A673 (cell line): ENCODE measurements at regions of chr10 and their contacts with region 1.

Region 1: DNA sequence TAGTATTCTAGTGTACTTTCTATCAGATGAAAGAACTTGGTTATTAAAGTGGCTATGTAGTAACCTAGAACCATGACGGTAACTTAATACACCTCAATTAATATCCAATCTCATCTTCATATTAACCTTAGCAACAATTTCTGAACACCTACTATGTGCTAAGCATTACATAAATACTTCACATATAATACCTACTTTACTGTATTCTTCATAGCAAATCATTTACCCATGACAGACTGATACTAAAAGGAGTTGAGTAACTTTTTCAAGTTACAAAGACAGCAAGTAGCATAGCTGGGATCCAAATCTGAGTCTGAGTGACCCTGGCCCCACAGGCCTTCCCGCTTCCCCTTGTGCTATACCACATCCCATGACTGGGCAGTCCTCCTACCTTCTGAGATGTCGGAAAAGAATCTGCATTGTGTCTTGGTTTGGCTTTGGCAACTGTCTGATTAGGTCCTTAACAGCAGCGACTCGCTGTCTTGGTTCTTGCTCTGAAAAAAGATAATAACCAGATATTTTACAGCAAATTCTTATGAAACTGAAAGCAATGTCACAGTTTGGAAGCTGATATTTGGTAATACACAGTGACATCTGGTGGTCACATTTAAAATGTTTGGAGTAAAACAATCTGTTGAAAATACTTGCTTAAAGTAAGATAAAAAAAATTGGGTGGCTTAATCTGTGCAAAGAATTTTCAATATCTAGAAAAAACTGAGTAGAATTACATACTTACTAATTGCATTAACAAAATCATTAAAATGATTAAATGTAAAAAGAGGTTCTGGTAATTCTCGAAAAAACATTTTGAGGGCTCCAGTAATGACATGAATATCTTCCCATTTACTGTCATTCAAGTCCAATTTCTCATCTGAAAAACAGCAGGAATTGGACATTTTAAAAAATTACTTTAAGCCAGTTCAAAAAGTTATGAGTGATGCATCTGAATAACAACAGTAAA is 120.1 kb downstream of the ARHGAP12 start:
- DNase-seq: peak; percentile 60
- H3K4me3 ChIP-seq: no peak overlapping the region
- H3K27ac ChIP-seq: peak overlapping the region; percentile 43
- H3K4me1 ChIP-seq: no peaks in the 10 kb centered on the region
- H3K27me3 ChIP-seq: no peaks in the 10 kb centered on the region
- CTCF ChIP-seq: peak; percentile 67

Region 2: DNA sequence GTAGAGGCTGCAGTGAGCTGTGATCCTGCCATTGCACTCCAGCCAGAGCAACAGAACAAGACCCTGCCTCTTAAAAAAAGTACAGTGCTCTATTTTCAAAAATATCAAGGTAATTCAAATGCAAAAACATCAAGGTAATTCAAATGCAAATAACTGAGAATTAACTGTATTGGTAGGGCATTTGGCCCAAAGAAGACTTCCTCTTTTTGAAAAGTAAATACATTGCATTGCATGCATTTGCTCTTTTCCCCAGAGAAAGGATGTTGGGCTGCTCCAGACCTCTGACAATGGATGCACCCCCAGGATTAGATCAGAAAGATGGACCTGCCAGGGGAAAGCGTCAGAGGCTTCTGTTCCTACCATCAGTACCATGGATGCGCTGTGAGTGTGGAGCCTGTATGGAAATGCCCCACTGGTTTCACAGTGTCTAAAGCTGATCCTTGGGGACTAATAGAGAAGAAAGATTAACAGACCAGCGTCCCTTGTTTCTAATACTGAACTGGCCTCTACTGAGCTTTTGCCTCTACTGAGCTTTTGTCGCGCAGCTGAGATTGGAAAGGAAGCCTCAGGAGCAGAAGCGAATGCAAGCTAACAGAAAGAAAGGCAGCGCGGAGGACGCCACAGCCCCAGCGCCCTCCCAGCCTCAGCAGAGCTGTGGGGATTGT is 1085.5 kb before region 1 on chr10:
- CTCF ChIA-PET with region 1: interaction called, 3 read pairs
- POLR2A ChIA-PET with region 1: no interaction called
- intact Hi-C with region 1: loop called (anchors 10 kb)
- DNase-seq: no peak
- H3K4me3 ChIP-seq: no peak overlapping the region
- H3K27ac ChIP-seq: no peak overlapping the region
- H3K4me1 ChIP-seq: no peaks in the 10 kb centered on the region
- H3K27me3 ChIP-seq: no peaks in the 10 kb centered on the region
- CTCF ChIP-seq: no peak

Region 3: GRCh38 chr10:30751678-30752331 is 1056.7 kb before region 1 on chr10:
- CTCF ChIA-PET with region 1: interaction called, 11 read pairs
- POLR2A ChIA-PET with region 1: no interaction called
- intact Hi-C with region 1: loop called (anchors 5 kb)
- DNase-seq: peak; percentile 80
- H3K4me3 ChIP-seq: no peak overlapping the region
- H3K27ac ChIP-seq: no peak overlapping the region
- H3K4me1 ChIP-seq: no peaks in the 10 kb centered on the region
- H3K27me3 ChIP-seq: no peaks in the 10 kb centered on the region
- CTCF ChIP-seq: peak; percentile 97

Region 4: DNA sequence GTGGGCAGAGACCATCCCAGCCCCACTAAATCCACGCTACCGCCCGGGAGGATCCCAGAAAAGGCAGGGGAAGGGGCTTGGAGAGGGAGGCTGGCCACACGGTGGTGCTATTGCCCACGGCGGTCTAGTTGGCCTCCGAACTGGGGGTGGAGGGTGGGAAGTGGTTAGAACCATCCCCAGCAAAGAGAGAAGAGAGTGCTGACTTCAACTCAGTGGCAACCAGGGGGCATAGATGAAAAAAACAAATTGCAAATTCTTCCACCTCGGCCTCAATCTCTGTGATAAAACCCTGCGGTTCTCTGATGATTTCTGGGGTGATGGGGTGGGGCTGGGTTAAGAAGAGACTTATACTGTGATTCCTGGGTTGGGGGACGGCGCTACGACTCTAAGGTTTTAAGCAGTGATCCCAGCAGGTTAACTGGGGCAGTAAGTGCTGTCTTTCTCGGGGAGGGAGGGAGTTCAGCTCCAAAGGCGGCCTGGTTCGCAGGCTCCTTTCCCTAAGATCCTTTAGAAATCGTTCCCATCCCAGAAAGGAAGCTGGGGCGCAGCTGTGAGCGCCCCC is 1024.5 kb before region 1 on chr10:
- CTCF ChIA-PET with region 1: interaction called, 4 read pairs
- POLR2A ChIA-PET with region 1: no interaction called
- intact Hi-C with region 1: loop called (anchors 5 kb)
- DNase-seq: peak; percentile 88
- H3K4me3 ChIP-seq: peak overlapping the region; percentile 56
- H3K27ac ChIP-seq: no peak overlapping the region
- H3K4me1 ChIP-seq: no peaks in the 10 kb centered on the region
- H3K27me3 ChIP-seq: no peaks in the 10 kb centered on the region
- CTCF ChIP-seq: peak; percentile 94

Region 5: GRCh38 chr10:31318854-31319601 is 489.5 kb before region 1 on chr10 and contains the start of gene ZEB1:
- CTCF ChIA-PET with region 1: no interaction called
- POLR2A ChIA-PET with region 1: no interaction called
- intact Hi-C with region 1: loop called (anchors 10 kb)
- DNase-seq: peak; percentile 86
- H3K4me3 ChIP-seq: peak within 1 kb of the TSS; percentile 68
- H3K27ac ChIP-seq: peak within 1 kb of the TSS; percentile 21
- H3K4me1 ChIP-seq: peaks cover 15% of the 10 kb centered on the region
- H3K27me3 ChIP-seq: peaks cover 43% of the 10 kb centered on the region
- CTCF ChIP-seq: 0 out of 2 replicates have a peak, but pooled peaks have one; percentile 22
- total RNA-seq, gene ZEB1: 8.3 and 10.3 TPM in 2 replicates

Region 6: DNA sequence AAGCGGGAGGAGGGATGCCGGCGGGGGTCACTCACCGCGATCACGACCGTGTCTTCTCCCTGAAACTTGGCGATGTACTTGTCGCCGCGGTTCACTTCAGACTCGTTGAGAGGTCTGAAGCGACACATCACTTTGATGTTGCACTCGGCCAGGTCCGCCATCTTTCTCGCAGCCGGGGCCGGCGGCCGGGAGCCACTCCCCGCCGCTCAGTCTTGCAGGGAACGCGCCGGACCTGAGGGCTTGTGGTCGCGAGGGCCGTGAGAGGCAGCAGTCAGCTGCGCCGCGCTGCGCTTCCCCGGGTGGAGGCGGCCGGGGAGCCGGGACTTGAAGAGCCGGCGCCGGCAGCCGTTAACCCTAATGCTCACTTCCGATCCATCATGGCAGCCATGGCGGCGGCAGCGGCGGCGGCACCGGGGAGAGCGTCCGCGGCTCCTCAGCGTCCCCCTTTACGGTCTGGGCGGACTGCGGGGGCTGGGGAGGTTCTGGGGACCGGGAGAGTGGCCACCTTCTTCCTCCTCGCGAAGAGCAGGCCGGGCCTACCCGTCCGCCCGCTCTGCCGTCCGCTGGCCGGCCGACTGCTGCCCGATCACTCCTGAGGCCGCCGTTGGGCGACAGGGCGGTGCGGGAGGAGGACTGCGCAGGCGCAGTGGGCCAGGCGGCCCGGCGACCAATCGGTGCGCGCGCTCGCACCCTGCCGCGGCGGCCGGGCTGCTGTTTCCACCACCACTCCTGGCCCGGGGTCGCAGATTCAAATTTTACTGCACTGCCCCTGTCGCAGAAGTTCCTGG is 247.5 kb after region 1 on chr10 and contains the start of gene KIF5B:
- CTCF ChIA-PET with region 1: no interaction called
- POLR2A ChIA-PET with region 1: no interaction called
- intact Hi-C with region 1: no loop called
- DNase-seq: peak; percentile 91
- H3K4me3 ChIP-seq: peak within 1 kb of the TSS; percentile 97
- H3K27ac ChIP-seq: peak within 1 kb of the TSS; percentile 95
- H3K4me1 ChIP-seq: peaks cover 27% of the 10 kb centered on the region
- H3K27me3 ChIP-seq: no peaks in the 10 kb centered on the region
- CTCF ChIP-seq: no peak
- total RNA-seq, gene KIF5B: 135 and 148 TPM in 2 replicates